MCF 10A (cell line): ENCODE measurements at regions of chr11 and their contacts with region 1.

Region 1: DNA sequence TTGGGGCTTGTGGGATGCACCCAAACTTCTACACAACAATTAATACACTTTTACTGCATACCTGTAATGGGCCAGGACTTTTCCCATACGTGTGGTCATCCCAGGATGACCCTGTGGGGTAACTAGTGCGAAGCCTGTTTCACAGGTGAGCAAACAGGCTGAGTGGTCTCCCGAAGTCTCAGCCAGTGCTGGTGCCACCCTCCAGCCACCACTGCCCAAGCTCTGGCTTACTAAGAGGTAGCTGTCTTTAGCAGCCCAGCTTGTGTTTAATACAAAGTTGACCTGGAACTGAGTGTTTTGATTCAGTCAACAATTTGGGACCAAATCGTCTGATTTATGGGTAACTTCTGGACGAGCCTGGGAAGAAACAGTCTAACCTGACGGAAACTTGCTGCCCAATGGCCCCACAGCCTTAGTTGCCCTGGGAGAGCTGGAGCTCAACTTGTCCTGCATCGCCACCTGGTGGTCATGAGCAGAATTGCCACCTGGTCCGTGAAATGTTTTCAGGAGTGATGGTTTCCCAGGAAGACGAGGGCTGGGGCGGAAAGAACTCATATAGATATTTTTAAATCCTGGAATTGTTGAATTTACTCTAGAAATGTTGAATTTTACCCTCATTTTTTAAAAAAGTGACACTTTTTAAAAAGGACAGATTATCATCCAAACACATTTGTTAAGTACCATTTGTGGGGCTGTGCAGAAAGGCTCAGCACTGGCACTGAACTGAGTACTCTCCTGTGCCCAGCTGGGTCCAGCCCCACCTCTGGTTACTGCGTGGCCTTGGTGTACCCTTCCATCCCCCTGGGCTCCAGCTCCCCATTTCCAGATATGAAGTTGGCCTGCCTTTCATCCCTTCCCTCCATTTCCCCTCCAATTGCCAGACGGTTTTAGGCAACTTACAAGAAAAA is 95.5 kb upstream of the PARVA start:
- DNase-seq: peak; percentile 83
- H3K4me3 Mint-ChIP-seq: no peak overlapping the region
- H3K27ac Mint-ChIP-seq: no peak overlapping the region
- H3K4me1 Mint-ChIP-seq: peaks cover 31% of the 10 kb centered on the region
- H3K27me3 Mint-ChIP-seq: no peaks in the 10 kb centered on the region
- CTCF ChIP-seq: peak; percentile 95

Region 2: DNA sequence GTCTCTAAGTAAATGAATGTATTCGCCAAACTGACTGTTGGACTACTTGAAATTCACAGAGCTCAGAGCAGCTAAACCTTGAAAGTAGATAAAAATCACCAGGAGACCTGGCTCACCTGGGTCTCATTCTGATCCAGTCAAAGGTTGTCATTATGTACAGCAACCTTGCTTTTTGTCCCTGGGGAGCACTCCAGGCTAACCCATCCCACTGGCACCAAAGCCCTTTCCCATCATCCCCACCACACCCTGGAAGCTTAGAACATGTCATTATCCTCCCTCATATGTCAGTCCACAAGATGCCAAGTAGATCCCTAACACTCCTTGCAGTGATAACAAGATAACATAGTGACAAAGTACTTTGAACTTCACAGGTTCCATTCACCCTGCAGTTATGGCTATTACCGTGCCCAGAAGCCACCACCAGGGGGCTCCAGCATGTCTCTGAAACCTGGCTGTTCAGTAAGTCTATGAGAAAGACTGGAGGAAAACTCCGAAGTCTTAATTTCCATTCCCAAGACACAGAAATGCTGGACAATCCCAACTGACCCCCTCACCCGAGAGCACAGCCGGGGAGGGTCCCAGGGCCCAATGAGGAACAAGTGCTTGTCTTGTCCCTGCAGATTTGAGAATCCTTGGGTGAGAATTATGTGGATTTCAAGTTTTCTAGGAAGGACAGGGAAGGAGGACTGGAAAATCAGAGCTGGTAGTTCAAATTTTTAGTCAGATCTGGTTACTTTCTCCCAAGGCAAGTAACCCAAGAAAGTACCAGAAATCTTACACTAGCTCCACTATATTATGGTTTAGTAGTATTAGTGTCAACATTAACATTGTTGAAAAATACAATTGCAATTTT is 483.0 kb before region 1 on chr11:
- CTCF ChIA-PET with region 1: interaction called, 9 read pairs
- POLR2A ChIA-PET with region 1: no interaction called
- intact Hi-C with region 1: loop called (anchors 1 kb)
- DNase-seq: peak; percentile 83
- H3K4me3 Mint-ChIP-seq: no peak overlapping the region
- H3K27ac Mint-ChIP-seq: no peak overlapping the region
- H3K4me1 Mint-ChIP-seq: no peaks in the 10 kb centered on the region
- H3K27me3 Mint-ChIP-seq: peaks cover 28% of the 10 kb centered on the region
- CTCF ChIP-seq: peak; percentile 79

Region 3: DNA sequence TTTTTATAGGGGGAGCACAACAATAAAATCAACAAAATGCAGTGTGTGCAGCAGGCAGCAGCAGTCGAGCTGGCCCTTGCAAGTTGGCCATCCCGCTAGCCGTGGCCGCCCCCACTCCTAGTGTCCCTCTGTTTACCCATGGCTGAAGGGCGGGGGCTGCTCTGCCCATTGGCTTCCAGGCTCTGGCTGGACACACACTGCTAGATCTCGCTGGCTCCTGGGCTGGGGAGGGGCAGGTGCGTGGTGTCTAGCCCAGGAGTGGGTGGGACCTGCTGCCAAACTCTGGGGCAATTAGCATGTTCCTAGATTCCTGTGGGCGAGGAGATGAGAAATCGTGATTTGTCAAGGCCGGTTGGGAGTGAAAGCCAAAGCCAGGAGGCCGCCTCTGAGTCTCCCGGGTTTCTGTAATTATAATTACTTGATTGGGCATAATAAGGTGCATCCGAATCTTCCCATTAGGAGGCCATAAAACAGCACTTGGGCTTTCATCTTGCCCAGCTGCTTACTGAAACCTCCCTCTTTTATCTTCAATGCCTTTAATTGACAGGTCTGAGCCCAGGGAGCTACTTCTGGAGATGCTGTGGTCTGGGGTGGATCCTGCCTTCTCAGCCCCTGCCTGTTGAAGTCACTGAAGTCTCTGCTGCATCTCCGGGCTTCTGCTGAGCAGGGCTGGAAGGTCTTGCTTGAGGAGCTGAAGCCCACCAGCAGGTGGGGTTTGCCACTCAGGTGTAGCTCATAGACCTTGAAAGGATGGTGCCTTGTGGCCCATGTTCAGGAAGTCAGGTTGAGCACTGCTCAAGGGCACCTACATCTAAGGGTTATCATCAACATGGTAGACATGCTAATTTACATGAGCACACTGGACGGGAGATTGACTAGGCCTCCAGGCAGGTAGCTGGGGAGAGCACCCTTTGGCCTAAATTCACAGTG is 228.9 kb before region 1 on chr11:
- CTCF ChIA-PET with region 1: interaction called, 314 read pairs
- POLR2A ChIA-PET with region 1: interaction called, 13 read pairs
- intact Hi-C with region 1: no loop called
- DNase-seq: peak; percentile 60
- H3K4me3 Mint-ChIP-seq: no peak overlapping the region
- H3K27ac Mint-ChIP-seq: peak overlapping the region; percentile 10
- H3K4me1 Mint-ChIP-seq: peaks cover 30% of the 10 kb centered on the region
- H3K27me3 Mint-ChIP-seq: no peaks in the 10 kb centered on the region
- CTCF ChIP-seq: no peak

Region 4: DNA sequence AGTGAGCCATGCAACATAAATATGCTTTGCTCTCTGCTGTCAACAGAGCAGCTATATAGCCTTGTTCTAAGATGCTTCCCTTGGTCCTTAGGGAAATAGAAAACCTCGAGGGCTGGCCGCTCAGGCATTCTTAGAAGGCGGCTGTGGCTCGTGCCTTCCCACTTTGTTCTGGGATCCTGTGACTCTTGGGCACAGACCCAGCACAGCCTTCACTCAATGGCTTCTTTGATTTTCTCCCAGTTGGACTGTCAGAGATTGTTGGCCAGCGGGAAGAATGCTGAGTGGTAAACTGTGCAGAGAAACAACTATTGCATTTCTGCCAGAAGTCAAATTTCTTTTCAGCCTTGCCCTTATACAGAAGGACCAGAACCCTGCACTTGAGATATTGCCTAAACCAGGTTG is 181.0 kb before region 1 on chr11:
- CTCF ChIA-PET with region 1: interaction called, 11 read pairs
- POLR2A ChIA-PET with region 1: no interaction called
- intact Hi-C with region 1: loop called (anchors 5 kb)
- DNase-seq: no peak
- H3K4me3 Mint-ChIP-seq: no peak overlapping the region
- H3K27ac Mint-ChIP-seq: no peak overlapping the region
- H3K4me1 Mint-ChIP-seq: peaks cover 11% of the 10 kb centered on the region
- H3K27me3 Mint-ChIP-seq: no peaks in the 10 kb centered on the region
- CTCF ChIP-seq: no peak

Region 5: GRCh38 chr11:12269104-12269441 is 12.8 kb before region 1 on chr11:
- CTCF ChIA-PET with region 1: interaction called, 24 read pairs
- POLR2A ChIA-PET with region 1: interaction called, 3 read pairs
- intact Hi-C with region 1: no loop called
- DNase-seq: peak; percentile 74
- H3K4me3 Mint-ChIP-seq: no peak overlapping the region
- H3K27ac Mint-ChIP-seq: peak overlapping the region; percentile 23
- H3K4me1 Mint-ChIP-seq: peaks cover 14% of the 10 kb centered on the region
- H3K27me3 Mint-ChIP-seq: no peaks in the 10 kb centered on the region
- CTCF ChIP-seq: no peak

Region 6: GRCh38 chr11:12629601-12630313 is 347.9 kb after region 1 on chr11:
- CTCF ChIA-PET with region 1: no interaction called
- POLR2A ChIA-PET with region 1: no interaction called
- intact Hi-C with region 1: no loop called
- DNase-seq: peak; percentile 24
- H3K4me3 Mint-ChIP-seq: no peak overlapping the region
- H3K27ac Mint-ChIP-seq: no peak overlapping the region
- H3K4me1 Mint-ChIP-seq: no peaks in the 10 kb centered on the region
- H3K27me3 Mint-ChIP-seq: no peaks in the 10 kb centered on the region
- CTCF ChIP-seq: no peak